Activated CD8-positive, alpha-beta T cell treated with anti-CD3 and anti-CD28 coated beads, Interleukin-2, amount 10 ng/mL, durations not matched to agents 7 days and 5 days (primary cell): ENCODE measurements at regions of chr18 and their contacts with region 1.

Region 1: DNA sequence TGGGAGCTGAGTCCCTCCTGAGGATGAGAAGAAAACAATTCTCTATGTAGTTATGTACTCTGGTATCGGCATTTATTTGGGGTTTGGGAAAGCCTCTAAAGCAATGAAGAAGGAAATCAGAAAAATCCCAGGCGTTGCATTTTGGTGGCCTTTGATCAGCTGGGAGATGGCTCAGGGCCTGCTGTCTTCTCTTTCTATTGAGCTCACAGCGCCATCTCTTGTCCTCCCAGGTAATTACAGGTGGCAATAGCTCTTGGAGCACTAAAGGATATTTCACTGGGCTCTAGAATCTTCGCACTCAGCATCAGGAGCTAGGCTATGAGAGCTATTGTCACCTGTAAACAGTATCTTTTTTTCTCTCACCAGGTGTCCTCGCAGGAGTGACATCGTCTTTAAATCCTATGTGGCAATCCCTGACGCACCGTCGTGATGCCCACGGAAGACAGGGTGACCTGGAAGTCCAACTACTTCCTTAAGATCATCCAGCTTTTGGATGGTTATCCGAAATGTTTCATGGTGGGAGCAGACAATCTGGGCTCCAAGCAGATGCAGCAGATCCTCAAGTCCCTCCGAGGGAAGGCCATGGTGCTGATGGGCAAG is 76.1 kb upstream of the PMAIP1 start:
- DNase-seq: peak; percentile 63
- ATAC-seq: no peak
- H3K4me3 Mint-ChIP-seq: no peak overlapping the region
- H3K27ac Mint-ChIP-seq: no peak overlapping the region
- H3K4me1 Mint-ChIP-seq: peaks cover 3% of the 10 kb centered on the region
- H3K27me3 Mint-ChIP-seq: peaks cover 12% of the 10 kb centered on the region

Region 2: GRCh38 chr18:59459369-59460079 is 364.2 kb before region 1 on chr18:
- CTCF ChIA-PET with region 1: interaction called, 34 read pairs
- POLR2A ChIA-PET with region 1: no interaction called
- DNase-seq: no peak
- ATAC-seq: no peak
- H3K4me3 Mint-ChIP-seq: no peak overlapping the region
- H3K27ac Mint-ChIP-seq: no peak overlapping the region
- H3K4me1 Mint-ChIP-seq: no peaks in the 10 kb centered on the region
- H3K27me3 Mint-ChIP-seq: peaks cover 5% of the 10 kb centered on the region

Region 3: DNA sequence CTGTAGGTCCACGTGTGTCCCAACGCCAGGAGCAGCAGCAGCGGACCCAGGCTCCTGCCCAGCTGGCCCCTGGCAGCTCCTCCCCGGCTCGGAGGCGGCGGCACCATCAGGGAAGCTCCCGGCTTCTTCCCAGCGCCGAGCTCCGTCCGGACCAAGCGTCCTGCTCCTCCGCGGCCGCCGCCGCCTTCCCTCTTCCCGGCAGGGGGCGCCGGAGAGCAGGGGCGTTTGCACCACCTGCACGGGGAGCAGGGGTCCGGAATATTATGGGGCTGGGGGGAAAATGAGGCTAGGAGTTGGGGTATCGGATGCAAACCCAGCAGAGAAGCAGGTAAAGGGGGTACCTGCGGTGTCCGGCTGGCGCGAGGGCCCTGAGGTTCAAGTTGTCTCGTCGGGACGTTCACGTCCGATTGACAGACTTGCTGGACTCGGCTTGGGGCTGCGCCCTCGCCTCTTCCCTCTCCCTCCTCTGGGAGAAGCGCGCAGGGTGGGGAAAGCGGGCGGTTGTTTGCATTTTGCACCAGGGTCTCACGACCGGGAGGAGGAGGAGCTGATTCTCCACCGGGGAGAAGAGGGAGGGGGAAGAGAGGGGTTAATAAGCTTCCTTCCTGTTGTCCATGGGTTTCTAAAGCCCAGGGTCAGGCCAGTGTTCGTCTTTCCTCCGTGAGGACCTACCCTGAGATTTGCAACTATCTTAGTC is 126.3 kb before region 1 on chr18 and contains the start of gene CCBE1:
- CTCF ChIA-PET with region 1: interaction called, 19 read pairs
- POLR2A ChIA-PET with region 1: no interaction called
- DNase-seq: peak; percentile 52
- ATAC-seq: peak; percentile 72
- H3K4me3 Mint-ChIP-seq: no peak within 1 kb of the TSS
- H3K27ac Mint-ChIP-seq: no peak within 1 kb of the TSS
- H3K4me1 Mint-ChIP-seq: peaks cover 7% of the 10 kb centered on the region
- H3K27me3 Mint-ChIP-seq: peaks cover 61% of the 10 kb centered on the region
- total RNA-seq, gene CCBE1: not detected

Region 4: DNA sequence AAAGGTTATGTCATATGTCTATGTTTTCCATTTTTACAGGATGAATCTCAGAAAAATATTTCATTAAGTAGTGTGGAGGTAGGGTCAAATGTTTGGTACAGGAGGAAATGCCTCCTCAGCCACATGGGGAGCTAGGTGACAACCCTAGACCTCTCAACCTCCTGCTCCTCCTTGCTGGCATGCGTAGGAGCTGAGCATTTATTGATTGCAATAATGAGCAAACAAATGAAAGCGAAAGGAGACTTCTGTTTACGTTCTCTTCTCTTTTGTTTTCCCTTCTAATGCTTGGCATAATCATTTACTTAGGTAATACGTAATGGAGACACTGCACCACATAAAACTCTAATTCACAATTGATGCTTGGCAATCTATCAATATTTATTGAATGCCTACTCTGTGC is 31.3 kb before region 1 on chr18:
- CTCF ChIA-PET with region 1: interaction called, 11 read pairs
- POLR2A ChIA-PET with region 1: no interaction called
- DNase-seq: no peak
- ATAC-seq: no peak
- H3K4me3 Mint-ChIP-seq: no peak overlapping the region
- H3K27ac Mint-ChIP-seq: no peak overlapping the region
- H3K4me1 Mint-ChIP-seq: no peaks in the 10 kb centered on the region
- H3K27me3 Mint-ChIP-seq: no peaks in the 10 kb centered on the region

Region 5: GRCh38 chr18:59861963-59862819 is 38.5 kb after region 1 on chr18:
- CTCF ChIA-PET with region 1: no interaction called
- POLR2A ChIA-PET with region 1: no interaction called
- DNase-seq: no peak
- ATAC-seq: no peak
- H3K4me3 Mint-ChIP-seq: no peak overlapping the region
- H3K27ac Mint-ChIP-seq: no peak overlapping the region
- H3K4me1 Mint-ChIP-seq: no peaks in the 10 kb centered on the region
- H3K27me3 Mint-ChIP-seq: peaks cover 2% of the 10 kb centered on the region

Region 6: GRCh38 chr18:59996370-59996966 is 172.8 kb after region 1 on chr18:
- CTCF ChIA-PET with region 1: interaction called, 11 read pairs
- POLR2A ChIA-PET with region 1: no interaction called
- DNase-seq: peak; percentile 25
- ATAC-seq: peak; percentile 51
- H3K4me3 Mint-ChIP-seq: no peak overlapping the region
- H3K27ac Mint-ChIP-seq: no peak overlapping the region
- H3K4me1 Mint-ChIP-seq: no peaks in the 10 kb centered on the region
- H3K27me3 Mint-ChIP-seq: peaks cover 39% of the 10 kb centered on the region